H1 (cell line): ENCODE measurements at regions of chr17 and their contacts with region 1.

Region 1: GRCh38 chr17:1882836-1883235 is 53.0 kb downstream of the RPA1 start:
- DNase-seq: peak in 1 of 2 experiments; percentile 58
- H3K4me3 ChIP-seq: no peak overlapping the region
- H3K27ac ChIP-seq: no peak overlapping the region
- H3K4me1 ChIP-seq: no peaks in the 10 kb centered on the region
- H3K27me3 ChIP-seq: no peaks in the 10 kb centered on the region
- CTCF ChIP-seq: peak in 2 of 3 experiments; percentile 57 to 62; a peak in 3 of 4 replicates
- EP300 ChIP-seq: no peak
- POLR2A ChIP-seq: no peak
- RAD21 ChIP-seq: peak; percentile 54 to 64

Region 2: DNA sequence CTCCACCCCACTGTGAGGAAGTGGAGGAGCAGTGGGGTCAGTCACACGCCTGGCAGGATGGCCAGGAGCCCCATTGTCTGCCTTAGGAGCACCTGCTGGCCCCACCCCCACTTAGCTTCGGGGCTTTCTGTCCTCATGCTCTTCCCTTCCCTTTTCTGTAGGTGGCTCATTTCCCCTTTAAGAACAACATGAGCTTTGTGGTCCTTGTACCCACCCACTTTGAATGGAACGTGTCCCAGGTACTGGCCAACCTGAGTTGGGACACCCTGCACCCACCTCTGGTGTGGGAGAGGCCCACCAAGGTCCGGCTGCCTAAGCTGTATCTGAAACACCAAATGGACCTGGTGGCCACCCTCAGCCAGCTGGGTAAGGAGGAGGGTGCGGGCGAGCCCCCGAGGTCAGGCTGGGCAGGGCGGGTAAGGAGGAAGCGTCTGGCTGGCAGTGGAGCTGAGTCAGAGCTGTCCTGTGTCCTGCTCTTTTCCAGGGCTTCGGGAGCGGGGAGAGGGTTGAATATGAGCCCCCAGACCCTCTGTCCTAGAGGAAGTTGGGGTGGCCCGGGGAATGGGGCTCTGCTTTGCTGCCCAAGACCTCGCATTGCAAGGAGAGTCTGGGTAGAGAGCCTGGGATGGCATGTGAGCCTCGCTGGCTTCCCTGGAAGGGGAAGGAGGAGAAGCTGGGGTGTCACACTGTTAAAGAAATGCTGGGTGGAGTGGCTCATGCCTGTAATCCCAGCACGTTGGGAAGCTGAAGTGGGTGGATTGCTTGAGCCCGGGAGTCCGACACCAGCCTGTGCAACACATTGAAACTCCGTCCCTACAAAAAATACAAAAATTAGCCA is 130.2 kb before region 1 on chr17:
- CTCF ChIA-PET with region 1: no interaction called
- POLR2A ChIA-PET with region 1: no interaction called
- DNase-seq: no peak
- H3K4me3 ChIP-seq: peak overlapping the region in 1 of 4 experiments; percentile 33; a peak in 1 of 8 replicates
- H3K27ac ChIP-seq: no peak overlapping the region
- H3K4me1 ChIP-seq: peaks cover 0 to 16% (median 11%) of the 10 kb centered on the region in 4 experiments; a peak in 6 of 7 replicates
- H3K27me3 ChIP-seq: no peaks in the 10 kb centered on the region
- CTCF ChIP-seq: no peak
- EP300 ChIP-seq: no peak
- POLR2A ChIP-seq: no peak
- RAD21 ChIP-seq: no peak

Region 3: DNA sequence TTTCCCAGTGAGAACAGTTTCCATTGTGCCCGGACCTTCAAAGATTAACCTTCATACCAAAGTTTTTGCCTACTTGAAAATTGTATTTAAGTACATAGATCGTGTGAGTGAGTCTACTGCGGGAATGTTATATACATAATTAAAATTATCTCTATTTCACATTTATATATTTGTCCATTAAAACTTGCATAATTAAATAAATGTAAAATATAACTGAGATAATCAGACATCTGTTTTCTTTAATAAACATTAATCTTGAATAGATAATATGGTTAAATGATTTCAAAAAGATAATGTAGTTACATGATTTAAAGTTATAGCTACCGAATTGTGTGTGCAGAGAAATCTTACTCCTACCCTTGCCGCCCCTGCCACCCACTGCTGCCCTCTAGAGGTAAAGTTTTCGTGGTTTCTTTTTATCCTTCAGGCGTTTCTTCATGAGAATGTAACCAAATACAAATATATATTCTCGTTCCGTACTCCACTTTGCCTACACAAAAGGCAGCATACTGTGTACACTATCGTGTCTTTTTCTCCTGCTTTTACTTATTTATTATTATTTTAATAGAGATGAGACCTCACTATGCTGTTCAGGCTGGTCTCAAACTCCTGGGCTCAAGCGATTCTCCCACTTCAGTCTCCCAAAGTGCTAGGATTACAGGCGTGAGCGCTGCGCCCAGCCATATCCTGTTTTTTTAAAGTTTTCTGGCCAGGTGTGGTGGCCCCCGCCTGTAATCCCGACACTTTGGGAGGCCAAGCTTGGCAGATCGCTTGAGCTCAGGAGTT is 17.4 kb before region 1 on chr17:
- CTCF ChIA-PET with region 1: interaction called, 18 read pairs
- POLR2A ChIA-PET with region 1: no interaction called
- DNase-seq: peak in 1 of 2 experiments; percentile 60
- H3K4me3 ChIP-seq: no peak overlapping the region
- H3K27ac ChIP-seq: no peak overlapping the region
- H3K4me1 ChIP-seq: no peaks in the 10 kb centered on the region
- H3K27me3 ChIP-seq: no peaks in the 10 kb centered on the region
- CTCF ChIP-seq: peak; percentile 48 to 56 (median 49)
- EP300 ChIP-seq: no peak
- POLR2A ChIP-seq: no peak
- RAD21 ChIP-seq: peak; percentile 41 to 45

Region 4: DNA sequence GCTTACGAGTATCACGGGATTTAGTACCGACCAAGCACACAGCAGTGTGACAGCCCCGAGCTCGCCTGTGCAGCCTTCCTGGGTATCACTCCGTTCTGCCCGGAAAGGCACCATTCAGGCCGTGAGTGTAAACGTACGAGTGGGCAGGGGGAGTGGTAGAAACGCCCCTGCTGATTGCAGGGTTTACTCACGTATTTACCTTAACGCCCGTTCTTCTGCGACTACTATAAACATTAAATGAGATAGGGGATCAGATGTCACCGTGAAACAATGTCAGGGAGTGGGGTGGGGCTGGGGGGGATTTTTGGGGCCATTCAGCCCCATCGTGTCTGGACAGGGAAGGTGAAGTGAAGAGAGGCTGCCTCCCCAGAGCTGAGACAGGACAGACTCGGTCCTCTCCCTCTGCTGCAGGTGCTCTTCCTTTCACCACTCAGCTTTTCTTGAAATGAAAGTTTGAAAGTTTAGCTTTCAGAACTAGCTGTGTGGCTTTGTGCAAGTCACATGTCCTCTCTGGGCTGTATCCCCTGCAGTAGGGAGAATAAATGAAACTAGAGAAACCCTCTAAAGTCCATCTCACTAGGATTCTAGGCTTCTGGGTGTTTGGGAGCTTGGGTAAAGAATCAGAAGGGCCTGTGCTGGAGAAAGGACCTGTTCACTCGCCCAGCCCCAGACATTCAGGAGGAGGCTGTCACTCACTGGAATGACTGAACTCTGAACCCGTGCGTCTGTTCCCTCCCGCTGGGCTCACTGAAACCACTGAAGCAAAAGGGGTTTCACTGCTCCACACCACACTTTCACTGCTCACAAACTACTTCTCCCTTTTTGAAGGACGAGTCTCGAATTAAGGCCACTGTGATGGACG is 13.6 kb after region 1 on chr17:
- CTCF ChIA-PET with region 1: interaction called, 18 read pairs
- POLR2A ChIA-PET with region 1: no interaction called
- DNase-seq: no peak
- H3K4me3 ChIP-seq: no peak overlapping the region
- H3K27ac ChIP-seq: no peak overlapping the region
- H3K4me1 ChIP-seq: no peaks in the 10 kb centered on the region
- H3K27me3 ChIP-seq: no peaks in the 10 kb centered on the region
- CTCF ChIP-seq: no peak
- EP300 ChIP-seq: no peak
- POLR2A ChIP-seq: no peak
- RAD21 ChIP-seq: no peak

Region 5: GRCh38 chr17:2041561-2042366 is 158.9 kb after region 1 on chr17 and contains the start of gene OVCA2:
- CTCF ChIA-PET with region 1: interaction called, 17 read pairs
- POLR2A ChIA-PET with region 1: no interaction called
- DNase-seq: peak in 1 of 2 experiments; percentile 96
- H3K4me3 ChIP-seq: peak within 1 kb of the TSS; percentile 58 to 82 (median 71)
- H3K27ac ChIP-seq: peak within 1 kb of the TSS; percentile 74
- H3K4me1 ChIP-seq: peaks cover 0 to 6% (median 5%) of the 10 kb centered on the region in 4 experiments; a peak in 4 of 7 replicates
- H3K27me3 ChIP-seq: peaks cover 0 to 2% (median 0%) of the 10 kb centered on the region in 4 experiments; a peak in 1 of 7 replicates
- CTCF ChIP-seq: peak; percentile 54 to 66 (median 54)
- EP300 ChIP-seq: no peak
- POLR2A ChIP-seq: peak in 1 of 2 experiments; percentile 85; a peak in 2 of 3 replicates
- RAD21 ChIP-seq: peak; percentile 58 to 75
- total RNA-seq, gene OVCA2: 14.9 and 15.3 TPM in 2 replicates